Activated naive CD4-positive, alpha-beta T cell treated with anti-CD3 and anti-CD28 coated beads for 36 hours (primary cell): ENCODE measurements at regions of chr3 and their contacts with region 1.

Region 1: DNA sequence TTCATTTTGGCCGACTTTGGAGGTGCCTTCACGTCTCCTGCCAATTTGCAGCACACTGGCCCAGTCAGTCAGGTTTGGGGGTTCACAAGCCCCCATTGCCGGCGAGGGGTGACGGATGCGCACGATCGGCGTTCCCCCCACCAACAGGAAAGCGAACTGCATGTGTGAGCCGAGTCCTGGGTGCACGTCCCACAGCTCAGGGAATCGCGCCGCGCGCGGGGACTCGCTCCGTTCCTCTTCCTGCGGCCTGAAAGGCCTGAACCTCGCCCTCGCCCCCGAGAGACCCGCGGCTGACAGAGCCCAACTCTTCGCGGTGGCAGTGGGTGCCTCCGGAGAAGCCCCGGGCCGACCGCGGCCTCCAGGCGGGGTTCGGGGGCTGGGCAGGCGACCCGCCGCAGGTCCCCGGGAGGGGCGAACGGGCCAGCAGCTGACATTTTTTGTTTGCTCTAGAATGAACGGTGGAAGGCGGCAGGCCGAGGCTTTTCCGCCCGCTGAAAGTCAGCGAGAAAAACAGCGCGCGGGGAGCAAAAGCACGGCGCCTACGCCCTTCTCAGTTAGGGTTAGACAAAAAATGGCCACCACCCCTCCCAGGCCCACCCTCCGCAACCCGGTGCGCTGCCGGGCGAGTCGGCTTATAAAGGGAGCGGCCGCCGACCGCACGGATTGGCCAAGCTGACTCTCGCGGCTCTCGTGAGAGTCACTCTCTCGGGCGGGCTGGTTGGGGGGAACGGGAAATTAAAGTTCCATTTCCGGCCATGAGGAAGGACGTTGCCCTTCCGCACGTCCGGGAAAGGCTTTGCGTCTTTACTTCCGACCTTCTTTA is at the start of gene TERC:
- DNase-seq: peak; percentile 94
- H3K4me3 Mint-ChIP-seq: peak within 1 kb of the TSS; percentile 97
- H3K27ac Mint-ChIP-seq: peak within 1 kb of the TSS; percentile 99
- H3K4me1 Mint-ChIP-seq: peaks cover 19% of the 10 kb centered on the region
- H3K27me3 Mint-ChIP-seq: no peaks in the 10 kb centered on the region
- total RNA-seq, gene TERC: 16.0 to 20.4 TPM

Region 2: GRCh38 chr3:169610888-169611291 is 153.8 kb before region 1 on chr3:
- CTCF ChIA-PET with region 1: no interaction called
- intact Hi-C with region 1: no loop called
- DNase-seq: no peak
- H3K4me3 Mint-ChIP-seq: no peak overlapping the region
- H3K27ac Mint-ChIP-seq: no peak overlapping the region
- H3K4me1 Mint-ChIP-seq: no peaks in the 10 kb centered on the region
- H3K27me3 Mint-ChIP-seq: peaks cover 4% of the 10 kb centered on the region

Region 3: GRCh38 chr3:169863458-169863899 is 98.8 kb after region 1 on chr3:
- CTCF ChIA-PET with region 1: interaction called, 4 read pairs
- intact Hi-C with region 1: loop called (anchors 1 kb)
- DNase-seq: peak; percentile 86
- H3K4me3 Mint-ChIP-seq: no peak overlapping the region
- H3K27ac Mint-ChIP-seq: no peak overlapping the region
- H3K4me1 Mint-ChIP-seq: peaks cover 25% of the 10 kb centered on the region
- H3K27me3 Mint-ChIP-seq: no peaks in the 10 kb centered on the region

Region 4: GRCh38 chr3:170037463-170038433 is 273.1 kb after region 1 on chr3 and contains the start of gene GPR160:
- CTCF ChIA-PET with region 1: interaction called, 3 read pairs
- intact Hi-C with region 1: loop called (anchors 2 kb)
- DNase-seq: peak; percentile 89
- H3K4me3 Mint-ChIP-seq: peak within 1 kb of the TSS; percentile 84
- H3K27ac Mint-ChIP-seq: no peak within 1 kb of the TSS
- H3K4me1 Mint-ChIP-seq: peaks cover 24% of the 10 kb centered on the region
- H3K27me3 Mint-ChIP-seq: no peaks in the 10 kb centered on the region
- total RNA-seq, gene GPR160: 10.3 TPM

Region 5: GRCh38 chr3:170221924-170222646 is 457.4 kb after region 1 on chr3 and contains the start of gene PRKCI:
- CTCF ChIA-PET with region 1: no interaction called
- intact Hi-C with region 1: loop called (anchors 1 kb)
- DNase-seq: peak; percentile 95
- H3K4me3 Mint-ChIP-seq: peak within 1 kb of the TSS; percentile 78
- H3K27ac Mint-ChIP-seq: peak within 1 kb of the TSS; percentile 92
- H3K4me1 Mint-ChIP-seq: peaks cover 24% of the 10 kb centered on the region
- H3K27me3 Mint-ChIP-seq: no peaks in the 10 kb centered on the region
- total RNA-seq, gene PRKCI: 20.8 to 23.0 TPM

Region 6: DNA sequence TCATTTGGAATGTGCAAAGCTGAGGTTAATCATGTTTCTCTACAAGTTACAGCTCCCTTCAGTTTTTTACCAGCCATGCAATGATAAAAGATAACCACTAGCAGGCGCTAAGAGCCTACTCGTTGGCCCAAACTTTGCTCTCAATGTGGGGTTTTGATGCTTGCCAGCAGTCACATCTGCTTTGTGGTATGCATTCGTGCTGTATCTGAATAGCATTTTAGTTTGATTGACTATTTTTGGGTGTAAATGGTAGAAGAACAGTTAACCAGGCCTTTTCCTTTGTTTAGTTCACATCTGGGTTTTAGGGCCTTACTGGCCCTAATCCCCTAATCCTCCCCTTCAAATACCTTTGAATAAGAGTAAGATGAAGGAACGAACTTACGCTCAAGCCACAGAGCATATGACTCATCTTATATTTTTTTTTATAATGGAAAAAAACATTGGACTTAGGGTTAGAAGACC is 649.6 kb after region 1 on chr3:
- CTCF ChIA-PET with region 1: interaction called, 5 read pairs
- intact Hi-C with region 1: loop called (anchors 2 kb)
- DNase-seq: peak; percentile 59
- H3K4me3 Mint-ChIP-seq: no peak overlapping the region
- H3K27ac Mint-ChIP-seq: no peak overlapping the region
- H3K4me1 Mint-ChIP-seq: peaks cover 6% of the 10 kb centered on the region
- H3K27me3 Mint-ChIP-seq: peaks cover 16% of the 10 kb centered on the region

Region 7: GRCh38 chr3:171269542-171269941 is 1504.9 kb after region 1 on chr3:
- CTCF ChIA-PET with region 1: no interaction called
- intact Hi-C with region 1: loop called (anchors 10 kb)
- DNase-seq: no peak
- H3K4me3 Mint-ChIP-seq: peak overlapping the region; percentile 25
- H3K27ac Mint-ChIP-seq: peak overlapping the region; percentile 50
- H3K4me1 Mint-ChIP-seq: peaks cover 84% of the 10 kb centered on the region
- H3K27me3 Mint-ChIP-seq: no peaks in the 10 kb centered on the region